ENCODE measurements at regions of chr2 and their contacts with region 1.

Region 1: DNA sequence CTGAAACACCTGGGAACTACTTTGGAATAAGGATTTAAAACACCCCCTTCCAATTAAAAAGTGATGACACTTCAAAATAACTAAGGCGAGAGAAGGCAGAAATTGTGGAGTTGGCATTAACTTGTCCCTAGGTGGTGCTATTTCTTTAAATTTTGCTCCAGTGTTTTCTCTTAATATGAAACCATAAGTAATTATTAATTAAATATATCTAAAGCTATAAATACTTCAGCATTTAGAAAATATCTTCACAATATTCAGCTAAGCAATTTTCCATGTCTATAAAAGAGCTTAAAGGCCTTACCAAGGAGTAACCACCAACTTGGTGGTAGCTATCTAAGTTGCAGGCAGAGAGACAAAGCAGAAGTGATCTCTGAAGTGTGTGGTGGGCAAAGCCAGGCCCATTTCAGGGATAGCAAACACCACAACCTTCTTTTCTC is 186.8 kb upstream of the PGAP1 start:
- DNase-seq: no peak
- H3K4me3 Mint-ChIP-seq: no peak overlapping the region
- H3K27ac Mint-ChIP-seq: peak overlapping the region; percentile 28
- H3K4me1 Mint-ChIP-seq: peaks cover 22% of the 10 kb centered on the region
- H3K27me3 Mint-ChIP-seq: no peaks in the 10 kb centered on the region

Region 2: DNA sequence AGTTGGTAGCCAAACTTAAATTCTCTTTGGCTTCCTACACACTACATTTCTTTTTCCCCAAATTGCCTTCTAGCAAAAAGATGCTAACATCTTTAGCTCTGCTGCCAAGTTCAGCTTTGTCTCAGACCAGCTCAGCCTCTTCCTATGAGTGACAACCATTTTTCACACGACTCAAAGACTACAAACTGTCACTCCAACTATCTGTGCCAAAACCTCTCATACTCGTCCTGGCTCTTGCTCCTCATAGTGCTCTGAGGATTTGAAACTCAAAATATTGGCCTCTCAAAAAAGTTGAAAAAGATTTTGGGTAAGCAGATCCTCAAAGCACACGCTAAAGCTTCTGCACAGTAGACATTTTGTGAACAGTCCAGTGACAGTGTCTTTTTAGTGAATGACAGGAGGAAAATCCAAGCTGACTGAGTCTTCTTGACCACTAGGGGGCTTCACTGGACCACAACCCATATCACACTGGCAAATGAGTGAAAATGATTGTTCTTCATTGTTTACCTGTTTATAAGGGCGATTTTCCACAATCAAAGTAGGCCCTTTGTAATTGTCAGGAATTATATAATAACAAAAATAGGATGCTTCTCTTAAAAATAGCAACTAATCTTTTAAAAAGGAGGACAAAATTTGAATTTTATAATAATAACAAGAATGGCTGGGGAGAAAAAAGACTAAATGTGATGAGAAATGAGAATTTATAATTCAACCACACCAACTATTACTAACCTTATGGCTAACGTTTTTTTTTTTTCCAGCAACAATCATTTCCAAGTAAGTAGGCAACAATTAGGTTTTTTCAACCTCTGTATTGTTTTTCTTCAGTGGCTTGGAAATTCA is 101.3 kb before region 1 on chr2:
- CTCF ChIA-PET with region 1: interaction called, 15 read pairs
- intact Hi-C with region 1: loop called (anchors 5 kb)
- DNase-seq: peak; percentile 42
- H3K4me3 Mint-ChIP-seq: no peak overlapping the region
- H3K27ac Mint-ChIP-seq: peak overlapping the region; percentile 81
- H3K4me1 Mint-ChIP-seq: peaks cover 2% of the 10 kb centered on the region
- H3K27me3 Mint-ChIP-seq: no peaks in the 10 kb centered on the region

Region 3: GRCh38 chr2:197137231-197137630 is 23.9 kb after region 1 on chr2:
- CTCF ChIA-PET with region 1: interaction called, 13 read pairs
- intact Hi-C with region 1: no loop called
- DNase-seq: peak; percentile 55
- H3K4me3 Mint-ChIP-seq: no peak overlapping the region
- H3K27ac Mint-ChIP-seq: peak overlapping the region; percentile 73
- H3K4me1 Mint-ChIP-seq: peaks cover 85% of the 10 kb centered on the region
- H3K27me3 Mint-ChIP-seq: no peaks in the 10 kb centered on the region

Region 4: GRCh38 chr2:197168705-197169104 is 55.4 kb after region 1 on chr2:
- CTCF ChIA-PET with region 1: interaction called, 78 read pairs
- intact Hi-C with region 1: loop called (anchors 1 kb)
- DNase-seq: peak; percentile 90
- H3K4me3 Mint-ChIP-seq: no peak overlapping the region
- H3K27ac Mint-ChIP-seq: peak overlapping the region; percentile 73
- H3K4me1 Mint-ChIP-seq: peaks cover 60% of the 10 kb centered on the region
- H3K27me3 Mint-ChIP-seq: no peaks in the 10 kb centered on the region

Region 5: DNA sequence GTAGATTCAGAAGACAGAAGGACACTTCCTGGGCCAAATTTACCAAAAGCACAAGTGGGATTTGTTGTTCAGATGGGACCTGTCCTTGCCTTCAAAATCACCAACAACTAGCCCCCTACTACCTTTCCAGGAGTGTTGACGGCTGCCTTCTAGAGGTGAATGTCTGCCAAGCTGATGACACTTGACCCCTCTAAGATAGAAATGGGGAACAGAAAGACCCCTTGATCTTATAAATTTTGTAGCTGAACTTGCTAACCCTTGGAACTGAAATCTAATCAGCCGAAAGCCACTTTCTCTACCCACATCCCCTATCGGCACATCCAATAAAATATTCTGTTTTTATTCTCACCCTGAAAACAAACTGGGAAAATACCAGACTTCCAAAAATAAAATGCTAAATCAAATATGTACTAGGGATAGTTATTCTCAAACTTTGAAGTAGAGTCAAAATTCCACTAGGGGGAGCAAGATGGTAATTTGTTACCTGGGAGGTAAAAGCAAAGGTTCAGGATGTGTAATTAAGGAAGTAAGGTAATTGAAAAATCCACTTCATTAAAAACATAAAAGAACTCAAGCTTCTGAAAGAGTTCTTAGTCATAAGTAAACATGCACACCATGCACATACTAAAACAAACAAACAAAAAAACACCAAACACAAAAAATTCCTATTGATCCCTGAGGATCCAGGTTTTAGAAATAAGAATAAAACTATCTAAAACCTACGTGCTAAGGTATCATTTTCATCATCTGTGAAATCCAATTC is 78.1 kb after region 1 on chr2:
- CTCF ChIA-PET with region 1: interaction called, 30 read pairs
- intact Hi-C with region 1: loop called (anchors 1 kb)
- DNase-seq: no peak
- H3K4me3 Mint-ChIP-seq: peak overlapping the region; percentile 19
- H3K27ac Mint-ChIP-seq: peak overlapping the region; percentile 85
- H3K4me1 Mint-ChIP-seq: peaks cover 74% of the 10 kb centered on the region
- H3K27me3 Mint-ChIP-seq: no peaks in the 10 kb centered on the region

Region 6: DNA sequence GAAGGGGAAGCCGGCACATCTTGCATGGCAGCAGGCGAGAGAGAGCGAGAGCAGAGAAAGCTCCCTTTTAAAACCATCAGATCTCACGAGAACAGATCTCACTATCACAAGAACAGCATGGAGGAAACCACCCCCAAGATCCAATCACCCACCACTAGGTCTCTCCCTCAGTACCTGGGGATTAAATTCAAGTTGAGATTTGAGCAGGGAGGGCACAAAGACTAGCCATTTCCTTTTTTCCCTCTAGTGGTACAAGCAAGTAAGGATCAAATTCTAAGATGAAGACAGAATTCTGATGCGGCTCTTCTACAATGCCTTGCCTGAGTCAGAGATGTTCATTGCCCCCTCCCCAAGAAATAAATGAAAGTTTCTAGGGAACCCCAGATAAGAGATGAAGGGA is 242.8 kb after region 1 on chr2:
- CTCF ChIA-PET with region 1: interaction called, 3 read pairs
- intact Hi-C with region 1: loop called (anchors 1 kb)
- DNase-seq: no peak
- H3K4me3 Mint-ChIP-seq: peak overlapping the region; percentile 17
- H3K27ac Mint-ChIP-seq: no peak overlapping the region
- H3K4me1 Mint-ChIP-seq: peaks cover 28% of the 10 kb centered on the region
- H3K27me3 Mint-ChIP-seq: no peaks in the 10 kb centered on the region

Measured in activated naive CD4-positive, alpha-beta T cell treated with anti-CD3 and anti-CD28 coated beads for 36 hours (primary cell).